A549 (cell line): ENCODE measurements at regions of chr9 and their contacts with region 1.

Region 1: GRCh38 chr9:131334629-131335367 is 45.3 kb downstream of the PLPP7 start:
- DNase-seq: no peak
- ATAC-seq: peak in 1 of 2 experiments; percentile 14; a peak in 1 of 6 replicates
- H3K4me3 ChIP-seq: no peak overlapping the region
- H3K27ac ChIP-seq: peak overlapping the region in 1 of 2 experiments; percentile 48; a peak in 1 of 6 replicates
- H3K4me1 ChIP-seq: no peaks in the 10 kb centered on the region
- CTCF ChIP-seq: no peak
- EP300 ChIP-seq: no peak
- POLR2A ChIP-seq: no peak
- RAD21 ChIP-seq: no peak

Region 2: GRCh38 chr9:131053896-131054295 is 280.9 kb before region 1 on chr9:
- CTCF ChIA-PET with region 1: interaction called, 74 read pairs
- POLR2A ChIA-PET with region 1: no interaction called
- DNase-seq: no peak
- ATAC-seq: no peak
- H3K4me3 ChIP-seq: no peak overlapping the region
- H3K27ac ChIP-seq: no peak overlapping the region
- H3K4me1 ChIP-seq: no peaks in the 10 kb centered on the region
- CTCF ChIP-seq: no peak
- EP300 ChIP-seq: no peak
- POLR2A ChIP-seq: no peak
- RAD21 ChIP-seq: no peak

Region 3: GRCh38 chr9:131178382-131178781 is 156.4 kb before region 1 on chr9:
- CTCF ChIA-PET with region 1: interaction called, 189 read pairs
- POLR2A ChIA-PET with region 1: no interaction called
- DNase-seq: peak; percentile 67 to 88
- ATAC-seq: peak; percentile 98 to 99
- H3K4me3 ChIP-seq: no peak overlapping the region
- H3K27ac ChIP-seq: no peak overlapping the region
- H3K4me1 ChIP-seq: no peaks in the 10 kb centered on the region
- CTCF ChIP-seq: peak; percentile 70
- EP300 ChIP-seq: no peak
- POLR2A ChIP-seq: no peak
- RAD21 ChIP-seq: peak; percentile 74 to 79

Region 4: DNA sequence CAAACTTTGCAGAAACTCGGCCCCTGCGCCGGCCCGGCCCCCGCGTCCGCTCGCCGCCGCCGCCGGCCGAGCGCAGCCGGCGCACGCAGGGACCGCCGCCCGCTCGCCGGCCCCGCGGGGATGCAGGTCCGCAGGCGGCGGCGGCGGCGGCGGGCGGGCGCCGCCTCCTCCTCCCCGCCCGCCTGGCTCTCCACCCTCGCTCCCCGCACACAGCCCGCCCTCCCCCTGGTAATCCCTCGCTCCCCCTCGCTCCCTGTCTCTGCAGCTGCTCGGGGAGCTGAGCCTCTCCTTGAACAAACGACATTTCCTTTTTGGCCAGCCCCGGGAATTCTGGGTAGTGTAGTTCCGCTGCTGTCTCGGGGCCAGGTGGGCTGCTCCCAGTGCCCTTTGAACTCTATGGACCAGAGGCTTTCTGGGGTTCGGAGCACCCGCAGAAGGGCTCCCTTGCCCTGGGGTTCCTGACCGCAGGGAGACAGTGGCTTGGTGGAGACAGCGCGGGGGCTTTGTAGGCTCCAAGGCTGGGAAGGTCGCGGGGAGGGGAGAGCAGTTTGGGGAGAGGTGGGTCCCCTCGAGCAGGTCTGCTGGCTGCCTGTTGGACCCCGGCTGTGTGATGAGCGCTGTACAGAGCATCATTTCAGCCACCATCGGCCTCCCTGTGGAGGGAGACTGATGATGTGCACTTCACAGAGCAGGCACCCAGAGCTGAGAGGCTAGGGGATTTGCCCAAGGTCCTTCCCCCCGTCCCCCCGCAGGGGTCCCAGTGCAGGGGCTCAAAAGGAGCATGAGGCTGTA is 56.7 kb before region 1 on chr9:
- CTCF ChIA-PET with region 1: interaction called, 12 read pairs
- POLR2A ChIA-PET with region 1: no interaction called
- DNase-seq: peak; percentile 69 to 94
- ATAC-seq: peak; percentile 63 to 84
- H3K4me3 ChIP-seq: peak overlapping the region; percentile 70
- H3K27ac ChIP-seq: peak overlapping the region; percentile 51 to 85
- H3K4me1 ChIP-seq: no peaks in the 10 kb centered on the region; the same call in 2 of the 3 replicates
- CTCF ChIP-seq: no peak
- EP300 ChIP-seq: no peak
- POLR2A ChIP-seq: no peak
- RAD21 ChIP-seq: no peak

Region 5: DNA sequence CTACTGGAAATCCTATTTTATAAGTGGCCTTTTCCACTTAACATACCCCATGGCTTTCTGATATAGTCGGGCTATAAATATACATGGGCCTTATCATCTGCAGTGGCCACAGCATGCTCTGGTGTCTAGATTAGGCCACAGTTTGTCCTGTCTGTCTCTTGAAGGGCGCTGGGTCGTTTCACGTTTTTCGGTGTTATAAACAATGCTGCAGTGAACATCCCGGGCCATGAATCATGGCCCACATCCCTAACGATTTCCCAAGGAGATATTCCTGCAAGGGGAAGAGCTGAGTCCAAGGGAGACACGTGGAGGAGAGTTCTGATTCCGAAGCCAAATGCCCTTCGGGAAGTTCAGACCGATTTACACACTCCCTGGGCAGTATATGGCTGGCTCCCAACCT is 36.9 kb before region 1 on chr9:
- CTCF ChIA-PET with region 1: interaction called, 28 read pairs
- POLR2A ChIA-PET with region 1: no interaction called
- DNase-seq: no peak
- ATAC-seq: no peak
- H3K4me3 ChIP-seq: no peak overlapping the region
- H3K27ac ChIP-seq: no peak overlapping the region
- H3K4me1 ChIP-seq: no peaks in the 10 kb centered on the region
- CTCF ChIP-seq: no peak
- EP300 ChIP-seq: no peak
- POLR2A ChIP-seq: no peak
- RAD21 ChIP-seq: no peak

Region 6: DNA sequence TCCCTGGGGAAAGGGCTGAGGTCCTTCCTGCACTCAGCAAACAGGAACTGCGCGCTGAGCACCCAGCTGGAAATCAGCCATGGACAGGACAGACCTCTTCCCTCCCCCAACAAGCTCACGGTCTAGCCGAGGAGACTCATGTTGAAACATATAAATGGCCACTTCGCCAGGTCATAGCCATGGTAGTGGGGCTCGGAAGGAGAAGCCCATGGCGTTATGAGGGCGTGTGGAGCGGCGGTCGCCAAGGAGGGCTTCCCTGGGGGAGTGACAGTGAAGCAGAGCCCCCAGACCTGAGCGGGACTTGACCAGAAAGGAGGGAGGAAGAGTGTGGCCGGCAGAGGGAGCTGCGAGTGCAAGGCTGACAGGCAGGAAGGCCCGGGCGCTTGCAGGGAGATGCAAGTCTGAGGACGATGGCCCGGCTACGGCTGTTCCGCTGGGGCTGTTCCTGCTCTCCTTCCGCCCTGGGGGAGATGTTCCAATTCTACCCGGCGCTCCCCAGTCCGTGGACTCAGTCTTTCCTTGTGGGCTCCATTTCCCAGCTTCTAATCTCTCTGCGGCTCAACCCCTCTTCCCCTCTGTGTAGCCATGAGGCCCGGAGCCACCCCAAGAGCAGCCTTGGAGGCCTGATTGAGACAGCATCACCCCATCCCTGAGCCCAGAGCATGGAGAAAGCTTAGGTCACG is 15.2 kb after region 1 on chr9:
- CTCF ChIA-PET with region 1: interaction called, 65 read pairs
- POLR2A ChIA-PET with region 1: no interaction called
- DNase-seq: peak; percentile 85 to 86
- ATAC-seq: peak; percentile 97 to 98
- H3K4me3 ChIP-seq: 0 out of 3 replicates have a peak overlapping the region, but pooled peaks have one; percentile 20
- H3K27ac ChIP-seq: peak overlapping the region; percentile 23 to 69; a peak in 4 of 6 replicates
- H3K4me1 ChIP-seq: 0 out of 3 replicates have a peak, but pooled peaks cover 3% of the 10 kb centered on the region
- CTCF ChIP-seq: peak; percentile 84
- EP300 ChIP-seq: no peak
- POLR2A ChIP-seq: no peak
- RAD21 ChIP-seq: peak; percentile 91 to 92